Mammary epithelial cell (primary cell): ENCODE measurements at regions of chr7 and their contacts with region 1.

Region 1: DNA sequence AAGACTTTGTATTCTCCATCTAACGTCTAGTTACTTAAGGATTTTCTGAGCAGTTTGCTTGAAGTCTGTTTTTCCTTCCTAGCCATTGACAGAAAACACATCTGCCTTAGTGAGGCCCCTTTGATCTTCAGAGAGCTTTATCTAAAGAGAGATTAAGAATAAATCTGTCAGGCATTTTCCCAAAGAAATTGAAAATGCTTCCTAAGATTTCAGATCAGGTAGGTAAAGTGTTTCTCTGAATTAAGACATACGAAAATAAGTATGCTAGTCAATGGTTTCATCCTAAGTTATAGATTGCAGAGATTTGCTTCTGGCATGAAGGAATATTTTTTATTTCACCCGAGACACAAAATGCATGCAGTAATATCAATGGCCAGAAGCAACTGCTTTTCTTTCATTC is 168.6 kb downstream of the SDK1 start:
- DNase-seq: no peak
- H3K4me3 ChIP-seq: no peak overlapping the region
- H3K27ac ChIP-seq: no peak overlapping the region
- H3K4me1 ChIP-seq: no peaks in the 10 kb centered on the region
- H3K27me3 ChIP-seq: no peaks in the 10 kb centered on the region
- CTCF ChIP-seq: no peak

Region 2: GRCh38 chr7:3174515-3175284 is 294.9 kb before region 1 on chr7:
- CTCF ChIA-PET with region 1: no interaction called
- dilution Hi-C with region 1: no loop called
- in situ Hi-C with region 1: no loop called
- intact Hi-C with region 1: no loop called
- DNase-seq: no peak
- H3K4me3 ChIP-seq: no peak overlapping the region
- H3K27ac ChIP-seq: no peak overlapping the region
- H3K4me1 ChIP-seq: no peaks in the 10 kb centered on the region
- H3K27me3 ChIP-seq: no peaks in the 10 kb centered on the region
- CTCF ChIP-seq: no peak

Region 3: DNA sequence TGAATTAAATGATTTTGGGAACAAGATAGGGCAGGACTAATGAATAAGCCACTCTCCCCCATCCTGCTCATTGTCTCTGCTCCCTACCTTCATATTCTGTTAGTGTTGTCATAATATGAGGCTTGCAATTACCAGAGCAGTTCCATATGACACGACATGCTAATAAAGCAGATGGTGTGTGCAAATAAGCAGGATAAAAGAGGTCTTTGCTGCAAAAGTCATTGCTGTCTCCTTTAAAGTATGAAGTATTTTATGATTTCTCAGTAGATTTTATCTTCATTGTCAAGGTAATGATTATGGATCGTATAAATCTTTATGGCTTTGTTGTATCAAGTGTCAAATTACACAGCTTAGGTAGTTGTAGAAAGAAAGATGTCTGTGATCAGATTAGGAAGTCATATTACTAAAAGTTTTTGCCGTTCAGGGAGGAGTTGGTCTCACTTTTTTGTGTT is 53.8 kb before region 1 on chr7:
- CTCF ChIA-PET with region 1: no interaction called
- dilution Hi-C with region 1: no loop called
- in situ Hi-C with region 1: no loop called
- intact Hi-C with region 1: loop called (anchors 2 kb)
- DNase-seq: peak; percentile 48
- H3K4me3 ChIP-seq: no peak overlapping the region
- H3K27ac ChIP-seq: no peak overlapping the region
- H3K4me1 ChIP-seq: no peaks in the 10 kb centered on the region
- H3K27me3 ChIP-seq: no peaks in the 10 kb centered on the region
- CTCF ChIP-seq: no peak

Region 4: DNA sequence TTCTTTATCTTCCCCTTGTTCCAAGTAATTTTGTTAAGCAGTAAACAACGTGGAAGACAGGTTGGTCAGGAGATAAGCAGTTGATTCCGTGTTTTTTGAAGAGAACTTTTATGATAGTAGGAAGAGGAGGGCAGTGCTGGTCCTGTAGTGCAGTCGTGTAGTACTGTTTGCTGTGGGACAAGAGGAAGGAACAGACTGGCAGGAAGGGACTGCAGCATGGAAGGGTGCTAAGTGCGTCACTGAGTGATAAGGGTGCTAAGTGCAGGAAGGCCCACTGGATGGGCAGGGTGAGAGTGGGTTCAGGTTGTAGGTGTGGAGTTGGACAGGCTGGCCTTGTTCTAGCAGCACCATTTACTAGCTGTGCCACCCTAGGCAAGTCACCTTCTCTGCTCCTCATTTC is 43.6 kb before region 1 on chr7:
- CTCF ChIA-PET with region 1: no interaction called
- dilution Hi-C with region 1: no loop called
- in situ Hi-C with region 1: no loop called
- intact Hi-C with region 1: no loop called
- DNase-seq: no peak
- H3K4me3 ChIP-seq: no peak overlapping the region
- H3K27ac ChIP-seq: no peak overlapping the region
- H3K4me1 ChIP-seq: peaks cover 10% of the 10 kb centered on the region
- H3K27me3 ChIP-seq: no peaks in the 10 kb centered on the region
- CTCF ChIP-seq: no peak

Region 5: DNA sequence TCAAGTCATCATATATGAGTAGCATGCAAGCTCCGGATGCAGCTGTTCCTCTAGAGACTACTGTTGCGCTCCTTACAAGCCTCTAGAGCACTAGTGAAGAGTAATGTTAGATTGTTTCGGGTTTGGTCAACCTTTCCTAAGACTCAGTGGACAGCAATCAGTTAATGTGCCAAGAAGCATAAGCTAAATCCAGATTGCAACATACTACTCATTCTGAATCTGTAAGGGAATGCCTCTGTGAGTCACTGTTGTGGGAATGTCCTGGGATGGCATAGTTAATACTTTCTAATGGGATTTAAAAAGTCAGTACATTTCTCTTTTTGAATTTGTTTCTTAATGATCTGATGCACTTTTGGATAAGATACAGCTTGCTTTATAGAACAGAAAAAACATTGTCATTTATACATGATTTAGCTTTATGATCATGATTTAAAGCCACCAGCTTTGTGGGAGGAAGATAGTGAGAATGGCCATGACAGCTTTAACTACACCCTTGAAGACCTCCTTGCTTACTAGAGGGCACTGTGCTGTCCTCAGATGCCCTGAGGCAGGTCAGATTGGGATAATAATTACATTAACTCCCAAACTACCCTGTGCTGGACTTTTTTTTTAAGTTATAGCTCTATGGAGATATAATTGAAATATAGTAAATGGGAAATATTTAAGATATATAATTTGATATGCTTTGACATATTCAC is 30.2 kb before region 1 on chr7:
- CTCF ChIA-PET with region 1: no interaction called
- dilution Hi-C with region 1: no loop called
- in situ Hi-C with region 1: no loop called
- intact Hi-C with region 1: no loop called
- DNase-seq: peak; percentile 88
- H3K4me3 ChIP-seq: no peak overlapping the region
- H3K27ac ChIP-seq: no peak overlapping the region
- H3K4me1 ChIP-seq: peaks cover 12% of the 10 kb centered on the region
- H3K27me3 ChIP-seq: no peaks in the 10 kb centered on the region
- CTCF ChIP-seq: no peak